BJ (cell line): ENCODE measurements at regions of chr16 and their contacts with region 1.

Region 1: DNA sequence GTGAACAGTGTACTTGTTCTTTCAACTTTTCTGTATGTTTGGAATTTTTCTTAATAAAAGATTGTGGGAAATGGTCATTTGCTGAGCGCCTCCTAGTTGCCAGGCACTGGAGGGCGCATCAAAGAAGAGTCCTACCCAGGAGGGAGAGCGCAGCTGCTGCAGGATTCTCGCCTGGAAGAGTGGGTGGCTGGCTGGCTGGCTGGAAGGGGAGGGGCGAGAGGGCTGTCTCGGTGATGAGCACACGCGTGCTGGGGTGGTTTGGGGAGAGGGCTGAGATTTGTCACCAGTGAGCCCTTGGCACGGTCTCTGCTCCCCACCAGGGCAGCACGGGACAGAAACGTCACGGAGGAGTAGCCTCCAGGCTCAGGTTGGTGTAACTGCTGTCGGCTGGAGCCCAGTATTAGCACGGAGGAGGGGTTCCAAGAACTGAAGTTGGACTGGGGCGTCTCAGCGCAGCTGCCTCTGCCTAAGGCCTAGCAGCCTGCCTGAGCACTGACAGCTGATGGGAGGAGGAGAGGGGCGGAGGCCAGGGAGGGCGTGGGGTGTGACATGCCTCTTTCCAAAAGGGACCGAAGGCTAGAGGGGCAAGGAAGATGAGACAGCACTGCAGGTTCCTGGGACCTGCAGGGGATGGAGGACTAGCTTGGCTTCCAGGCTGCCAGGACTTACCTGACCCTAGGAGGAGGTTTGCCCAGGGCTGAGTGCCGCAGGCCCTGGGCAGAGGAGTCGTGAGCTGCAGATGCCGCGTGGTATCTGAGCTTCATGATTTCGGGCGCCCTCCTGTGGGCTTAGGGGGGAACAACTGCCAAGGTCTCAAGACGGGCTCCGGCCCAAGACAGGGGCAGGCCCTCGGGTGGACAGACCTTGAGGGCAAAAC is 5.7 kb downstream of the LDHD start:
- DNase-seq: peak; percentile 29
- H3K4me3 ChIP-seq: 0 out of 2 replicates have a peak overlapping the region, but pooled peaks have one; percentile 13
- H3K27me3 ChIP-seq: no peaks in the 10 kb centered on the region
- CTCF ChIP-seq: peak; percentile 94

Region 2: GRCh38 chr16:74813109-74813641 is 297.7 kb before region 1 on chr16:
- CTCF ChIA-PET with region 1: interaction called, 21 read pairs
- POLR2A ChIA-PET with region 1: no interaction called
- DNase-seq: no peak
- H3K4me3 ChIP-seq: no peak overlapping the region
- H3K27me3 ChIP-seq: peaks cover 3% of the 10 kb centered on the region
- CTCF ChIP-seq: peak; percentile 99

Region 3: GRCh38 chr16:74998481-74999218 is 112.2 kb before region 1 on chr16 and contains the start of gene ZNRF1:
- CTCF ChIA-PET with region 1: interaction called, 199 read pairs
- POLR2A ChIA-PET with region 1: interaction called, 6 read pairs
- DNase-seq: no peak
- H3K4me3 ChIP-seq: peak within 1 kb of the TSS; percentile 72
- H3K27me3 ChIP-seq: peaks cover 1% of the 10 kb centered on the region
- CTCF ChIP-seq: peak; percentile 71
- polyA plus RNA-seq, gene ZNRF1: 21.7 and 24.1 TPM in 2 replicates

Region 4: GRCh38 chr16:75089486-75090202 is 21.2 kb before region 1 on chr16:
- CTCF ChIA-PET with region 1: interaction called, 10 read pairs
- POLR2A ChIA-PET with region 1: no interaction called
- DNase-seq: no peak
- H3K4me3 ChIP-seq: no peak overlapping the region
- H3K27me3 ChIP-seq: no peaks in the 10 kb centered on the region
- CTCF ChIP-seq: no peak

Region 5: GRCh38 chr16:75121949-75122568 is 11.2 kb after region 1 on chr16:
- CTCF ChIA-PET with region 1: interaction called, 17 read pairs
- POLR2A ChIA-PET with region 1: no interaction called
- DNase-seq: no peak
- H3K4me3 ChIP-seq: no peak overlapping the region
- H3K27me3 ChIP-seq: no peaks in the 10 kb centered on the region
- CTCF ChIP-seq: no peak

Region 6: DNA sequence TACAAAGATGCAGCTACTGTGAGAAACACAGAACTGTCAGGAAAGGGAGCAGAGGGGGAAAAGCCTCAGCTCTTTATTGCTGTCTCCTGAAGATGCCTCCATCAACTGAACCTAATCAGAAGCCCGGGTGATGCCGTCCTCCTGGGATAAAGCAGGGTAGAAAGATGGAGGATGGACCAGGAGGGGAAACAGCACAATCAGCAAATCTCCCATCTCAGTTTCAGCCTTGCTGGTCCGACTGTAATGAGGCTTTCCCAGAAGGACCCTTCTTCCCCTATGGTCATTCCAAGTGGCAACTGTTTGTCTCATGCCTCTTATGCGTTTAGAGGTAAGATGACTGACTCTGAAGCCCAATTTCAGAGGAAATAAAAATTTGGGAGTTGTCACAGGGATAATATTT is 61.7 kb after region 1 on chr16:
- CTCF ChIA-PET with region 1: no interaction called
- POLR2A ChIA-PET with region 1: no interaction called
- DNase-seq: no peak
- H3K4me3 ChIP-seq: no peak overlapping the region
- H3K27me3 ChIP-seq: no peaks in the 10 kb centered on the region
- CTCF ChIP-seq: no peak